ENCODE measurements at regions of chr5 and their contacts with region 1.

Region 1: GRCh38 chr5:98923966-98924365 is 4.8 kb downstream of the CHD1 start:
- DNase-seq: no peak
- ATAC-seq: no peak
- H3K4me3 ChIP-seq: no peak overlapping the region
- H3K27ac ChIP-seq: no peak overlapping the region
- H3K4me1 ChIP-seq: no peaks in the 10 kb centered on the region
- H3K27me3 ChIP-seq: no peaks in the 10 kb centered on the region
- CTCF ChIP-seq: peak in 1 of 3 experiments; percentile 3; a peak in 1 of 6 replicates
- EP300 ChIP-seq: no peak
- POLR2A ChIP-seq: no peak
- RAD21 ChIP-seq: no peak

Region 2: DNA sequence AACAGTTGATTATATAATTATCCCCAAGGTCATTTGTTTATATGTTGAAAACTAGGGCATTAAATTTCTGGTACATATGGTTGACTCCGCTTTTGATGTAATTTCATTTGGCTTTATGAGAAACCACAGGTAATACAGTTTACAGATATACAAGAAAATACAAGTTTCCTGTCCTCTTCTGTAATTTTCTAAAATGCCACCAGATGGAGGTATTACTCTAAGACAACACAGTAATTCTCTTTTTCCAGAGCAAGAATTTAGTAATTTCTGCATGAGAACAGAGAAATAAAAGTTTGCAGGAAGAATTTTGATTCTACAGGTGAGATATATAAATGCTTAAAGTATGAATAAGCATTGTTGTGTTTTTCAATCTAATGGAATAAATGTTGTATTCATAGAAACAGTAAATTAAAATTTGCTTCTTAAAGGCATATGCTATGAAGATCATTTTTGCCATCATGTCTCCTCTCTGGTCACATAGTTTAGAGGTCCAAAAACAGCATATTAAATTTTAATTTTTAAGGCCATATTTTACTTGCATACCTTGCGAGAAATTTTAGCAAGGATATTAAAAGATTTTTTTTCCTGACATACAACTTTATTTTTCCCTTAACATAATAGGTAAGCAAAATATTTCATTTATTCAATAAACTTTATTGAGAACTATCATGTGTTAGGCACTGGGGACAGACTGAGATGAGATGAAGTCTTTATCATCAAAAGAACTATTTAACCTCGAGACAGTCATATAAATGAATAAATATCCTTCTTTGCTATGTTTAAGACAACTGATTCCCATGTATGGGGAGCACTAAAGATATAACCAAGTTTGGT is 17.9 kb before region 1 on chr5:
- CTCF ChIA-PET with region 1: interaction called, 17 read pairs
- POLR2A ChIA-PET with region 1: interaction called, 4 read pairs
- RAD21 ChIA-PET with region 1: interaction called, 6 read pairs
- SMC1A ChIA-PET with region 1: interaction called, 14 read pairs
- in situ Hi-C with region 1: no loop called
- intact Hi-C with region 1: loop called (anchors 2 kb)
- DNase-seq: no peak
- ATAC-seq: peak; percentile 70
- H3K4me3 ChIP-seq: no peak overlapping the region
- H3K27ac ChIP-seq: no peak overlapping the region
- H3K4me1 ChIP-seq: no peaks in the 10 kb centered on the region; the same call in 1 of the 2 replicates
- H3K27me3 ChIP-seq: no peaks in the 10 kb centered on the region
- CTCF ChIP-seq: peak; percentile 47 to 65 (median 47); a peak in 5 of 6 replicates
- EP300 ChIP-seq: no peak
- POLR2A ChIP-seq: no peak
- RAD21 ChIP-seq: peak; percentile 92

Region 3: DNA sequence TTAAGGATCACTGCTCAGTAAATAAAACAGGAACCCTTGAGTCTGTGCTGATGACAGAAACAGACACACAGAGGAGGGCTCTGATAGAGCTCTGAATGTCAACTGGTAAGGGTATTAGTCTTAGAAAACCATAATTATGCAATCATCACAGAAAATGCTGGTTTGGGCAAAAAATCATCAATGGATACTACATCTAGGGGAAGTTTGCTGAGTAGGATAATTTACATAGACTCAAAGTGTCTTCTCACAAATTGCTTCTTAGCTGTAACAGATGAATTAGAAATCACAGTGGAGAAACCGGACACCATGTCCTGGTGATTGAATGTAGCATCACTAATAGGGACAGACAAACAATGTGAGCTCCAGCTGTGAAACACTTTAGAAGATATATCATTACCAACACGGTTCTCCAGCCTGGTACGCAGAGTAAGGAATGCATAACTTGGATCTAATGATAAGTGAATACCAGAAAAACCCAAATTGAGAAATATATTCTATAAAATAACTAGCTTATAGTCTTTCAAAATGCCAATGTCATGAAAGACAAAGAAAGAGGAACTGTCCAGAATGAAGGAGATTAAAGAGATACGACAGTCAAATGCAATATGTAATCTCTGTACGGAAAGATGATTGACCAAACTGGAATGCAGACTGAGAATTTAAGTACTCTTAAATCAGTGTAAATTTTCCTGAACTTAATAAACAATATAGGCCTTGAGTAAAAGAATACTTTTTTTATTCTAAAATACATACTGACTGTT is 12.5 kb before region 1 on chr5:
- CTCF ChIA-PET with region 1: interaction called, 17 read pairs
- POLR2A ChIA-PET with region 1: interaction called, 5 read pairs
- RAD21 ChIA-PET with region 1: interaction called, 7 read pairs
- SMC1A ChIA-PET with region 1: interaction called, 14 read pairs
- in situ Hi-C with region 1: no loop called
- intact Hi-C with region 1: loop called (anchors 2 kb)
- DNase-seq: no peak
- ATAC-seq: peak; percentile 22; the same call in 2 of the 3 replicates
- H3K4me3 ChIP-seq: no peak overlapping the region
- H3K27ac ChIP-seq: no peak overlapping the region
- H3K4me1 ChIP-seq: no peaks in the 10 kb centered on the region; the same call in 1 of the 2 replicates
- H3K27me3 ChIP-seq: no peaks in the 10 kb centered on the region
- CTCF ChIP-seq: no peak
- EP300 ChIP-seq: no peak
- POLR2A ChIP-seq: no peak
- RAD21 ChIP-seq: no peak

Region 4: DNA sequence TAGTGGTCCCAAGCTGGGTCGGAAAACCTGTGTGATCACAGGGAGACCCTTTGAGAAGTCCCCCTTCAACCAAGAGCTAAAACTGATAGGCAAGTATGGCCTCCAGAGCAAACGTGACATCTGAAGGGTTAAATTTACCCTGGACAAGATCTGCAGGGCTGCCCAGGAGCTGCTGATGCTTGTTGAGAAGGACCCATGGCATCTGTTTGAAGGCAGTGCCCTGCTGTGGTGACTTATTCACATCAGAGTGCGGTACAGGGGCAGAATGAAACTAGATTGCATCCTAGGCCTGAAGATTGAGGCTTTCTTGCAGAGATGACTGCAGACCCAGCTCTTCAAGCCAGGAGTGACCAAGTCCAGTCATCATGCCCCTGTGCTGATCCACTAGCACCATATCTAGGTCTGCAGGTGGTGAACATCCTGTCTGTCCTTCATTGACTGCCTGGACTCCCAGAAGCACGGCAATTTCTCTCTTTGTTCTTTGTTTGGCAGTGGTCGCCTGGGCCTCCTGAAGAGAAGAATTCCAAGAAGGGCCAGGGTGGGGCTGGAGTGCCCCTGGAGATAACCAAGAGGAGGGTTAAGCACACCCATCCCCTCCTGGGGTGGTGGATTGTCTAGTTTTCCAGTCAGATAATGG is 30.5 kb after region 1 on chr5:
- CTCF ChIA-PET with region 1: no interaction called
- POLR2A ChIA-PET with region 1: no interaction called
- RAD21 ChIA-PET with region 1: no interaction called
- SMC1A ChIA-PET with region 1: no interaction called
- in situ Hi-C with region 1: no loop called
- intact Hi-C with region 1: no loop called
- DNase-seq: no peak
- ATAC-seq: no peak
- H3K4me3 ChIP-seq: no peak overlapping the region
- H3K27ac ChIP-seq: no peak overlapping the region
- H3K4me1 ChIP-seq: no peaks in the 10 kb centered on the region
- H3K27me3 ChIP-seq: no peaks in the 10 kb centered on the region
- CTCF ChIP-seq: no peak
- EP300 ChIP-seq: no peak
- POLR2A ChIP-seq: no peak
- RAD21 ChIP-seq: no peak

Region 5: DNA sequence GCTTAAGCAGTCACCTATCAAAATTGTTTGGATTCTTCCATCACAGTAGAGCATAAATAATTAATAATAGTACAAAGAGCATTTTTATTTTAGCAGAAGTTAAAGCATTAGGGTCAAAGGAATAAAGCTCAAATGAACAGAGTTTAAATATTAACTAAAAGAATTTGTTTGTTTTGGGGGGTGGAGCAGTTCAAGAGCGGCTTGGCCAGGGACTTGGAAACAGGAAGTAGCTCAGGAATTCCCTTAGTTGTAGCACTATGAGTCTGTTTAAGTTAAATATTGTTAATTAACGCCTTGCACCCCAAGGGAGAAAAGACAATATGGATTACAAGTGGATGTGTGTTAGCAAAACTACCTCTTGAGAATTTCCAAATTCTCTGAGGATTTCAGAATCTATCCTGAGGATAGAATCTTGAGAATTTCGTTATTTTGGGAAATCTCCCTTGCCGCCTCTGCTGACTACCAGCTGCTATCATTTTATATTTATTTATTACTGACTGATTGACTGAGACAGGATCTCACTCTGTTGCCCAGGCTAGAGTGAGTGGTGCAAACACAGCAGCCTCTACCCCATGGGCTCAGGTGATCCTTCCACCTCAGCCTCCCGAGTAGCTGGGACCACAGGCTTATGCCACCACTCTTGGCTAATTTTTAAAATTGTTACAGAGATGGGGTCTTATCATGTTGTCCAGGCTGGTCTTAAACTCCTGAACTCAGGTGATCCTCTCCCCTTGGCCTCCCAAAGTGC is 101.5 kb after region 1 on chr5:
- CTCF ChIA-PET with region 1: interaction called, 20 read pairs
- POLR2A ChIA-PET with region 1: interaction called, 23 read pairs
- RAD21 ChIA-PET with region 1: interaction called, 10 read pairs
- SMC1A ChIA-PET with region 1: interaction called, 39 read pairs
- in situ Hi-C with region 1: loop called (anchors 5 kb)
- intact Hi-C with region 1: loop called (anchors 1 kb)
- DNase-seq: no peak
- ATAC-seq: no peak
- H3K4me3 ChIP-seq: no peak overlapping the region
- H3K27ac ChIP-seq: peak overlapping the region; percentile 95
- H3K4me1 ChIP-seq: peaks cover 41% of the 10 kb centered on the region
- H3K27me3 ChIP-seq: no peaks in the 10 kb centered on the region
- CTCF ChIP-seq: no peak
- EP300 ChIP-seq: peak in 1 of 2 experiments; percentile 42; a peak in 2 of 4 replicates
- POLR2A ChIP-seq: no peak
- RAD21 ChIP-seq: no peak

Region 6: GRCh38 chr5:99156688-99157087 is 232.7 kb after region 1 on chr5:
- CTCF ChIA-PET with region 1: no interaction called
- POLR2A ChIA-PET with region 1: no interaction called
- RAD21 ChIA-PET with region 1: no interaction called
- SMC1A ChIA-PET with region 1: no interaction called
- in situ Hi-C with region 1: no loop called
- intact Hi-C with region 1: no loop called
- DNase-seq: no peak
- ATAC-seq: no peak
- H3K4me3 ChIP-seq: no peak overlapping the region
- H3K27ac ChIP-seq: no peak overlapping the region
- H3K4me1 ChIP-seq: no peaks in the 10 kb centered on the region
- H3K27me3 ChIP-seq: no peaks in the 10 kb centered on the region
- CTCF ChIP-seq: no peak
- EP300 ChIP-seq: no peak
- POLR2A ChIP-seq: no peak
- RAD21 ChIP-seq: no peak

Region 7: DNA sequence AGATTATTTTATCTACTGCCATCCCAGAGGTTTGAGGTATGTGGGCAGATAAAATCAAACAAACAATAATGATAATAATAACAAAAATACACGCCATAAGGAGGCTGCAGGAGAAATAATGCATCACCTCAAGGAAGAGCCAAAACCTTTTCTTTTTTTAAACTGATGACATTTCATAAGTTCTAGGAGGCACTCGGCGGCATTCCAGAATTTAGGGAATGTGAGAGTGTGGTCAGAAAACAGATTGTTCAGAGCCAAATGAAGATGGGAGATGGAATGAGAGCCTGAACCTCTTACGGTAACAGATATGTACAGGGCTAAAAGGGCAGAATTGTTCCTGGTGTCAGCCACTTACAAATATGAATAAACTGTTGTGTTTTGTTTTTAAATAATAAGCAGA is 619.9 kb after region 1 on chr5:
- CTCF ChIA-PET with region 1: no interaction called
- POLR2A ChIA-PET with region 1: no interaction called
- RAD21 ChIA-PET with region 1: no interaction called
- SMC1A ChIA-PET with region 1: no interaction called
- in situ Hi-C with region 1: no loop called
- intact Hi-C with region 1: no loop called
- DNase-seq: no peak
- ATAC-seq: no peak
- H3K4me3 ChIP-seq: no peak overlapping the region
- H3K27ac ChIP-seq: no peak overlapping the region
- H3K4me1 ChIP-seq: no peaks in the 10 kb centered on the region
- H3K27me3 ChIP-seq: no peaks in the 10 kb centered on the region
- CTCF ChIP-seq: no peak
- EP300 ChIP-seq: no peak
- POLR2A ChIP-seq: no peak
- RAD21 ChIP-seq: no peak

Measured in GM12878 (cell line).